Right cardiac atrium (tissue), 5 donors: ENCODE measurements at regions of chr4 and their contacts with region 1.

Region 1: DNA sequence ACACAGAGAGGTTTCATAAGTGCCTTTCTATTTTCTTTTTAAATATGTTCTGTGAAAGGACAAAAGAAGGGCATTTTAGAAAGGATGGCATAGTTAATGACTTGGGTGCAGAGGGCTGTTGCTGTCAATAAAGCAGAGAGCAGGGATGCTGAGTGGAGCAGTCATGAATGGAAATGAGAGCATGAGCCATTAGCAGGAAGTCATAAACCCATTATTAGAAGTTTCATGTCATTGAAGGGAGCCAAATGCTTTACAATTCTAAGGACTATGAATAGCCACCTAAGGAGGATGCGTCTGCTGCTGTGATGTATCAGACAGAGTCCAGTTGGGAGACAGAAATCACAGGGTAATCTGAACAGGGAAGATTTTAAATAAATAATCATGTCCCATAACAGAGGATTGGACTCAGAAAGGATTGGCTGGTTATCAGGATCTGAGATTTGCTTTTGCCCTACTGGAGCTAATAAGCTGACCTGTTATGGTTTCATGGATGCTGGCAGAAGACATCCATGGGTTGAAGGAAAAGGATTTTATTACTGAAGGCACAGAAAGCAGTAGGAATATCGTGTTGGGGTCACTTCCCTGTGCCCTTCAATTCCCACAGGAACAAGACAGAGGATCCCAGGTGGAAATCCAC is 47.5 kb upstream of the WDR19 start:
- DNase-seq: no peak
- ATAC-seq: no peak
- H3K4me3 ChIP-seq: no peak overlapping the region
- H3K27ac ChIP-seq: no peak overlapping the region
- H3K4me1 ChIP-seq: no peaks in the 10 kb centered on the region
- H3K27me3 ChIP-seq: no peaks in the 10 kb centered on the region

Region 2: DNA sequence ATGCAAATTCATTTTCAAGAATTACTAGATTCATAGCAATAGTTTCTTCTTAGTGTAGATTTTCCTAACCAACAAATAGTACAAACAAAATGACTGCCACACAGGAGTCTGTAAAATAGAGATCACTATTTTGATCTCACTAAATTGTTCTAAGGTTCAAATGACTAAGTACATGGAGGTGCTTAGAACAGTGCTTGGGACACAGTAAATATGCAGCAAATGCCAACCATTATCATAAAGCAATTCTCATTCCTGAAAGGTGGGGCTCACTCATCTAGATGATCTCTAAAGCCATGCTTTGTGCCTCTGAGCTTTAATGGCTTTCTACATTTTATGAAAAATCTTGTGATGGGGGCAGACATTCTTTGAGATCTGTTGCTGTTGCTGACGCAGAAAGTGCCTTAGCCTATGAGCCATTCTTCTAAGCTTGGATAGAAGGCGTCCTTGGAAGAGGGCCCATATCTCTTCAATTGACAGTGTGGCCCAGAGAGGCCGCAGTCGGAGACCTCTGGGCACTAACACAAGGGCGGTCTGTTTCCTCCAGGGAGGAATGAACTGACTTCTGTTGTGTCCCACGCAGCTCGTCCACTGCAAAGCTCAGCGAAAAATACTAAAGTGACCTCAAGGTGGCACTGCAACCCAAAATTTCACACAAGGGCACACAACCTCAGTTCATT is 375.6 kb before region 1 on chr4:
- intact Hi-C with region 1: loop called in 2 of 4 experiments (anchors 10 kb)
- DNase-seq: peak; percentile 56 to 78 (median 69)
- ATAC-seq: peak; percentile 92 to 94
- H3K4me3 ChIP-seq: no peak overlapping the region
- H3K27ac ChIP-seq: no peak overlapping the region
- H3K4me1 ChIP-seq: peaks cover 3% of the 10 kb centered on the region
- H3K27me3 ChIP-seq: no peaks in the 10 kb centered on the region

Region 3: DNA sequence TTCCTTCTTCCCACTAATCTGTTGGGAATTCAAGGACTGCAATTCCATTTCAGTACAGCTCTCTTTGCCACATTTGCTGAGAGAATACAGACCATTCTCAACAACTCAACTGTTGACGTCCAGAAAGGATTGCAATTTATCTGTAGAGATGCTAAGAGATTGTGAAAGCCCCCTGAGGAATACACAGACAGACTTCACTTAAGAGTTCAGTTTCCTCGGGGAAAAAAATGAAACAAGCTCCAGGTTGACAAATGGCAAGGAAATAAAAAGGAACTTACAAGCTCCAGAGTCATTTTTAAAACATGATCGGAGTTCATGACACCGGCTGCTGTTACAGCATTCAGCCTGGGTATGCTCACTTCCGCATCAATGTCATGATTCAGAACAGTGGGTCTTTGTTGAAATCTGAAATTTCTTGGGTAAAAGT is 365.8 kb before region 1 on chr4:
- intact Hi-C with region 1: loop called in 1 of 4 experiments (anchors 10 kb)
- DNase-seq: no peak
- ATAC-seq: peak; percentile 43 to 56
- H3K4me3 ChIP-seq: no peak overlapping the region
- H3K27ac ChIP-seq: no peak overlapping the region
- H3K4me1 ChIP-seq: peaks cover 2% of the 10 kb centered on the region
- H3K27me3 ChIP-seq: no peaks in the 10 kb centered on the region

Region 4: DNA sequence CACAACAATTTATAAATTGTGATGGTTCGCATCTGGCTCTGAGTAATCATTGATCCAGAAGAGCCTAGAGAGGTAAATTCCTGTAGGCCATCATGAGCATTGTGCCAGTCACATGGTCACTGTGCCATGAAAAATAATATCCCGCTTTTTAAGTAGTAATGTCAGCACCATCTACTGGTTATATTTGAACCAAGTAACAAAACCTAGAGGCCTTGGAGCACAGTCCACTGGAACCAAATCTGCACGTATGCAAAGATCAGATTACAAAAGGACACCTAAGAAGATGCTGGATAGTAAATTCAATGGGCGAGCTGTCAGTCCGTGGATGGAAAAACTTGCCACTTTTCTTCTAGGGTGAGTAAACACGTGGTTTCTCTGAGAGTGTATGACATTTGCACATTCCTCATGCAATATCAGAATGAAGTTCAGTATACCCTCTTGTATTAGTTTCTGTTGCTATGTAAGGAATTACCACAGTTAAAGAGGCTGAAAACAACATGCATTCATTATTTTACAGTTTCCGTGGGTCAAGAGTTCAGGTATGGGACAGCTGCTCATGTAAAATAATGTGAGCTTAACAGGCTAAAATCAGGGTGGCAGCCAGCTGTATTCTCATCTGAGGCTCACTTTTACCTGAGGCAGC is 240.3 kb before region 1 on chr4:
- intact Hi-C with region 1: loop called in 1 of 4 experiments (anchors 10 kb)
- DNase-seq: no peak
- ATAC-seq: no peak
- H3K4me3 ChIP-seq: no peak overlapping the region
- H3K27ac ChIP-seq: no peak overlapping the region
- H3K4me1 ChIP-seq: no peaks in the 10 kb centered on the region
- H3K27me3 ChIP-seq: no peaks in the 10 kb centered on the region

Region 5: DNA sequence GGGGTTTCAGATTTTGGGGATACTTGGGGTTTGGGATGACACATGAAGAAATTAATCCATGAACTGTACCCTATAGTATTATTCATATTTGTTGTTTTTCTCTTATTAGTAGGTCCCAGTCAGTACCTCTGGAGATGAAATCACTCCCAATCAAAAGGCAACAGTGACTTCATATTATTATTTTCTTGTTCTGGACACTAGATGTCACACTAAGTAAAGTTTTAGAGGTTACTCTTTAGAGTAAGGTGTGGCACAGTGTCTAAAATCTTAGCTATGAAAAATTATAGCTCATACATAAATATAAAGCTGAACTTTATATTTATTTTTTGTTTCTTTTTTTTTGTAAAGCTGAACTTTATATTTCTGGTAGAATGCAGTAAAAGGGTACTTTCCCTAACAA is 232.1 kb before region 1 on chr4:
- intact Hi-C with region 1: loop called (anchors 5 to 10 kb)
- DNase-seq: no peak
- ATAC-seq: peak; percentile 32 to 34
- H3K4me3 ChIP-seq: no peak overlapping the region
- H3K27ac ChIP-seq: no peak overlapping the region
- H3K4me1 ChIP-seq: no peaks in the 10 kb centered on the region
- H3K27me3 ChIP-seq: no peaks in the 10 kb centered on the region

Region 6: GRCh38 chr4:39243462-39243861 is 108.7 kb after region 1 on chr4:
- intact Hi-C with region 1: no loop called
- DNase-seq: no peak
- ATAC-seq: no peak
- H3K4me3 ChIP-seq: no peak overlapping the region
- H3K27ac ChIP-seq: no peak overlapping the region
- H3K4me1 ChIP-seq: no peaks in the 10 kb centered on the region
- H3K27me3 ChIP-seq: no peaks in the 10 kb centered on the region